HEK293T (cell line): ENCODE measurements at regions of chr1 and their contacts with region 1.

Region 1: DNA sequence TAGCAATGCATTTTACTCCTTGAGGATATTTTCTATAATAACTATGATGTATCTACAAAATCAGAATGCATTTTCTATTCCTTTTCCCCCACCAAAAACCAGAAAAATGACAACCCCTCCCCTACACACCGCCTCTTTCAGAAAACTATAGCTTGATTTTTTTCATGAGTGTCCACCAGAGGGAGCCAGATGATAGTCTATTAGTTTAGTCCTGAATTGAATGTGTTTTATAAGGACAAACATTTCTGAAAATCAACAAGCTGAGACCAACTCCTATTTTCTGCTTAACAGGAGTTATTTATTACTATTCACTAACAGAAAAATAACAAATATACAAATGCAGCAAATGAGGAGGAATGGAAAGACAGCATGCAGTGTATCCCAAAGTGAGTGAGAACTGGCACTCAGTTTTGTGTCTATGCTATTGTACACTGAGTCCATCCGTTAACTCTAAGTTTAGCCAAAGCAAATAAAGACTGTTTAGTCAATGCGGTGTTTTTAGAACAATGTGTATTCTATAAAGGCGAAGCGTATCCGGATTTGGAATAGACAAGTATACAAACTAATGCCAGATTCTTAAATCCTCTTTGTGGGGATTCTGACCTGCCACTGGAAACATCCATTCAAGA is 182.6 kb downstream of the VAV3 start:
- DNase-seq: peak; percentile 27

Region 2: DNA sequence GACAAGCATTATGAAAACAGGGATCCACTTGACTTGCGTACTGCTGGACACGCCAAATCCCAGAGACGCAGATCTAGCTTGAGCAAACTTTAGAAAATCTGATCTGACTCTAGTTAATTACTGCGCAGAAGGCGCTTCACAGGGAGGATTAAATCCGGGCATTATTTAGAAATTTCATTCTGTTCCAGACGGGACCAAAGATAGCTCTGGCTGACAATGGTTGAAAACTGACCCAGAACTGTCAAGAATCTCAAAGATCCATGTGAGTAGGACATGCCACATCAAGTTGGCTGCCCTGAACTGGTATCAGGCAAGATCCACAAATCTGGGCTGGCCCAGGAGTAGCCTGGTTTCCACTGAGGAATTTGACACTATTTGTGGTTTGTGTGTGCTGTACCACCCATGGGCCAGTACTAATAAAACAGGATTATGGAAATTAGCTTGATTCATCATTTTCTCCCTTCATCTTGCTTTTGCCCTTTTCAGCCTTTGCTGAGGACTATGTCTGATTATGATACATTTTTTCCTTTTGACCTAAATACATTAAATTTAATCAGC is 11.6 kb after region 1 on chr1:
- CTCF ChIA-PET with region 1: interaction called, 11 read pairs
- POLR2A ChIA-PET with region 1: no interaction called
- DNase-seq: no peak

Region 3: DNA sequence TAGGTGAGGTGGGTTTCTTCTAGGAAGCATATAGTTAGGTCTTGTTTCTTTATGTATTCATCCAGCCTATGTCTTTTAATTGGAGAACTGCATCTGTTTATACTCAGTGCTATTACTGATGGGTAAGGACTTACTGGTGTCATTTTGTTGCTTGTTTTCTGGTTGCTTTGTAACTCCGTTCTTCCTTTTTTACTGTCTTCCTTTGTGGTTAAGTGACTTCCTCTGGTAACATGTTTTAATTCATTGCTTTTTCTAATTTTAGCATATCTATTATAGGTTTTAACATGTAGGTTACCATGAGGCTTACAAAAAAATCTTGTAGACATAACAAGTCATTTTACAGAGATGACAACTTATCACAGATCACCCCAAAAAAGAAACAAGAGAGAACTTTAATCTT is 21.8 kb after region 1 on chr1:
- CTCF ChIA-PET with region 1: no interaction called
- POLR2A ChIA-PET with region 1: no interaction called
- DNase-seq: no peak

Region 4: DNA sequence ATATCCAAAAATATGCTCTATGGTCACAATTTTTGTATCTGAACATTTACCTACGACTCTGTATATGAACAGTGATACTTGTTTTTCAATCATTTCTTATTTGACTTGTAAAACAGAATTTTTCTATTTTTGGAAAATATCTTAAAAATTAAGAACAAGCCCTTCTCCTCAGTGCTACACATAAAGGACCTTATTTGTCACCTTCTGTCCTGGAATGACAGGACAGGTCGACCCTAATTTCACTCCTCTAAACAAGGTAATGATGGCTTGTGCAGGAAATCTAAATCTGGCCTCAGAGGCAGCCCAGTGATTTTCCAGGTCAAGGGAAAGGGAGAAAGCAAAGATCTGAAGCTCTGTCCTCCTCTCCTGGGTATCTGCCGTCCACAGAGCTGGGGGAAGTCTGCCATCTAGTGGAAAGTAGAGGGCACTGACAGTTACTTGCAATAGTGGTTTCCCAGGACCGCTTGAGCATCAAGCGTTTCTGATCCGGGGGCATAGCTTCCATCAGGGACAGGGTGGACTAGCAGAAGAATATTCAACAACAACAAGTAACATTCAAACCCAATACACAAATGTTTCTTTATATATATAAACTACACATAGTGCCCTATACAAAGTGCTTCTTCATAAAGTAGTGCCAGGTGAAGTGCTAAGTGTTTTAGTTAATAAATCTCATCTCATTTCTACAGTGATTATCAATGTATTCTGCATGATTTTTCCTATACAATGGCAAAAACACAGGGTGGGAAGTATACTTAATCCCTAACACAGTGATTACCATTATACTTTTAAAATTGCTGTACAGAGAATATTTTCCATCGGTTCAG is 343.2 kb after region 1 on chr1:
- CTCF ChIA-PET with region 1: interaction called, 116 read pairs
- POLR2A ChIA-PET with region 1: interaction called, 6 read pairs
- DNase-seq: peak; percentile 85